Activated B cell treated with CpG ODN at 0.5 μM for 24 hours (primary cell): ENCODE measurements at regions of chr14 and their contacts with region 1.

Region 1: GRCh38 chr14:95527387-95528002 is 7.4 kb upstream of the GLRX5 start:
- DNase-seq: no peak
- ATAC-seq: peak; percentile 85
- H3K4me3 Mint-ChIP-seq: no peak overlapping the region
- H3K27ac Mint-ChIP-seq: peak overlapping the region; percentile 65
- H3K4me1 Mint-ChIP-seq: peaks cover 43% of the 10 kb centered on the region
- H3K27me3 Mint-ChIP-seq: no peaks in the 10 kb centered on the region
- CTCF ChIP-seq: peak; percentile 96

Region 2: GRCh38 chr14:95431199-95432143 is 96.0 kb before region 1 on chr14:
- CTCF ChIA-PET with region 1: interaction called, 36 read pairs
- POLR2A ChIA-PET with region 1: no interaction called
- intact Hi-C with region 1: loop called (anchors 1 kb)
- DNase-seq: no peak
- ATAC-seq: peak; percentile 65
- H3K4me3 Mint-ChIP-seq: no peak overlapping the region
- H3K27ac Mint-ChIP-seq: no peak overlapping the region
- H3K4me1 Mint-ChIP-seq: peaks cover 3% of the 10 kb centered on the region
- H3K27me3 Mint-ChIP-seq: no peaks in the 10 kb centered on the region
- CTCF ChIP-seq: no peak

Region 3: GRCh38 chr14:95442633-95443021 is 84.9 kb before region 1 on chr14:
- CTCF ChIA-PET with region 1: interaction called, 162 read pairs
- POLR2A ChIA-PET with region 1: interaction called, 6 read pairs
- intact Hi-C with region 1: loop called (anchors 1 kb)
- DNase-seq: peak; percentile 55
- ATAC-seq: peak; percentile 91
- H3K4me3 Mint-ChIP-seq: no peak overlapping the region
- H3K27ac Mint-ChIP-seq: peak overlapping the region; percentile 78
- H3K4me1 Mint-ChIP-seq: peaks cover 34% of the 10 kb centered on the region
- H3K27me3 Mint-ChIP-seq: no peaks in the 10 kb centered on the region
- CTCF ChIP-seq: no peak

Region 4: GRCh38 chr14:95452176-95452892 is 75.2 kb before region 1 on chr14:
- CTCF ChIA-PET with region 1: interaction called, 17 read pairs
- POLR2A ChIA-PET with region 1: no interaction called
- intact Hi-C with region 1: no loop called
- DNase-seq: no peak
- ATAC-seq: peak; percentile 41
- H3K4me3 Mint-ChIP-seq: no peak overlapping the region
- H3K27ac Mint-ChIP-seq: no peak overlapping the region
- H3K4me1 Mint-ChIP-seq: peaks cover 8% of the 10 kb centered on the region
- H3K27me3 Mint-ChIP-seq: no peaks in the 10 kb centered on the region
- CTCF ChIP-seq: no peak

Region 5: DNA sequence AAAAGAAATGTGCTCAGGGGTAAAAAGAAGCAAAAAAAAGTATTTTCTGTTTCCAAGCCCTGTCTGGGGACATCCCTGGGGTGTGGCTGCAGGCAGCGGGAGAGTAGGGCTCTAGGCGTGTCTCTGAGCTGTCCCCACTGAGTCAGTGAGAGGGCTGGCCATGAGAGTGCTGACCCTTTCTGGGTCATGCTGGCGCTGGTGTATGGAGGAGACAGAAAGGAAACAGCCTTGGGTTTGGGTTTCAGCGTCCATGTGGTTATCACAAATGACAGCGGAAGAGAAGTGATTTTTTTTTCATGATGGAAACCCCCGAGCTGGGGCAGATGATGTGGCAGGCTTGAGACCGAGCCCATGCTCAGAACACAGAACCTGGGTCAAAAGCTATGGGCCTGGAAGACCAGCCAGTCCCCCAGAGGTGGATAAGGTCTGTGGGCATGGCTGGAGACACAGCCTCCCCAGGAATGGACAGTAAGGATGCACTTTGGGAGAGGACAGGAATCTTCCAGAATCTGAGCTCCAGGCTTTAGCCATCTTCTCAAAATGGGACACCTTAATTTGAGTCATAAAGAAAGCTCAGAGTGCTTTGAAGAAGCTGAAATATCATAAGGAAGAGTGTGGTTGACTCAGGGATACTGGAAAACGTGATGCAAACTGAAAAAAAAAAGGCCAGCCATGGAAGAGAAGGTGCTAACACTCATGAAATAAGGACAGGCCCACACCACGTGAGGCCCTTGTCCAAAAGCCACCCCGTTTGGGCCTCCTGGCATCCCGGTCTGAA is 47.2 kb before region 1 on chr14:
- CTCF ChIA-PET with region 1: interaction called, 7 read pairs
- POLR2A ChIA-PET with region 1: interaction called, 3 read pairs
- intact Hi-C with region 1: loop called (anchors 1 kb)
- DNase-seq: no peak
- ATAC-seq: peak; percentile 85
- H3K4me3 Mint-ChIP-seq: peak overlapping the region; percentile 52
- H3K27ac Mint-ChIP-seq: peak overlapping the region; percentile 90
- H3K4me1 Mint-ChIP-seq: peaks cover 53% of the 10 kb centered on the region
- H3K27me3 Mint-ChIP-seq: no peaks in the 10 kb centered on the region
- CTCF ChIP-seq: no peak